Activated B cell treated with CpG ODN at 0.5 μM for 24 hours (primary cell): ENCODE measurements at regions of chr2 and their contacts with region 1.

Region 1: GRCh38 chr2:63588385-63589147 is at the starts of genes MDH1 and WDPCP:
- DNase-seq: peak; percentile 80
- ATAC-seq: peak; percentile 86
- H3K4me3 Mint-ChIP-seq: peak within 1 kb of the TSS; percentile 97
- H3K27ac Mint-ChIP-seq: peak within 1 kb of the TSS; percentile 97
- H3K4me1 Mint-ChIP-seq: peaks cover 47% of the 10 kb centered on the region
- H3K27me3 Mint-ChIP-seq: no peaks in the 10 kb centered on the region
- CTCF ChIP-seq: no peak
- total RNA-seq, gene MDH1: 117 and 120 TPM in 2 replicates
- total RNA-seq, gene WDPCP: 10.0 and 12.9 TPM in 2 replicates

Region 2: DNA sequence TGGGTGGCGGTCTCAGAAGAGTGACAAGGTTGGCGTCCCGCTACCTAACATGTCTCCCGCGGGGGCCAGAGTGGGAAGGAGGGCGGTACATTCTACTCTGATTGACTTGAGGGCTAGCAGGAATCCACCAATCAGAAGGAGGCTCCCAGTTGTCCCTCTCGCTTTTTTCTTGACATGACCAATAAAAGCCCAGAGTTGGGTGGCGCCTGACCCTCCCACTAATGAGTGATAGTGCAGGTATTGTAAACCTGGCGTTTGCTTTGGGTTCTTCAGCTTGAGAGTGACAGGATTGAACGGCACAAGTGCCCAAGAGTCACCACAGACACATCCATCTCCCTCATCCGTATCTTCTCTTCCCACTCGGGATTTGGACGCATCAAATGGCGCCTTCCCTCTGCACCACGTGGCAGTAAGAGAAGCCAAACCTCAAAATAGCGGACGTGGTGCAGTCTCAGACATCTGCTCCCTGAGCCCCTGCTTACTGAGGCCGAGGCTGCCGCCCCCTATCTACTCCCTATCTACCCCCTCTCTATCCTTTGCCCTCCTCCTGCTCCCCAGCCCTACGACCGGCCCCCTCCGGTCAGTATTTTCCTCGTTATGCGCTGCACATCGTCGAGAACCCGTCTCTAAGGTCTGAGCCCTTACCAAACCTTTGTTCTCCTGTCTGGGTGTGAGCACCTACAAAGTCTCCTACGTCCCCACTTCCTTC is 1733.9 kb before region 1 on chr2:
- CTCF ChIA-PET with region 1: no interaction called
- POLR2A ChIA-PET with region 1: no interaction called
- intact Hi-C with region 1: loop called (anchors 1 kb)
- DNase-seq: peak; percentile 69
- ATAC-seq: peak; percentile 86
- H3K4me3 Mint-ChIP-seq: peak overlapping the region; percentile 94
- H3K27ac Mint-ChIP-seq: peak overlapping the region; percentile 95
- H3K4me1 Mint-ChIP-seq: peaks cover 19% of the 10 kb centered on the region
- H3K27me3 Mint-ChIP-seq: no peaks in the 10 kb centered on the region
- CTCF ChIP-seq: no peak

Region 3: DNA sequence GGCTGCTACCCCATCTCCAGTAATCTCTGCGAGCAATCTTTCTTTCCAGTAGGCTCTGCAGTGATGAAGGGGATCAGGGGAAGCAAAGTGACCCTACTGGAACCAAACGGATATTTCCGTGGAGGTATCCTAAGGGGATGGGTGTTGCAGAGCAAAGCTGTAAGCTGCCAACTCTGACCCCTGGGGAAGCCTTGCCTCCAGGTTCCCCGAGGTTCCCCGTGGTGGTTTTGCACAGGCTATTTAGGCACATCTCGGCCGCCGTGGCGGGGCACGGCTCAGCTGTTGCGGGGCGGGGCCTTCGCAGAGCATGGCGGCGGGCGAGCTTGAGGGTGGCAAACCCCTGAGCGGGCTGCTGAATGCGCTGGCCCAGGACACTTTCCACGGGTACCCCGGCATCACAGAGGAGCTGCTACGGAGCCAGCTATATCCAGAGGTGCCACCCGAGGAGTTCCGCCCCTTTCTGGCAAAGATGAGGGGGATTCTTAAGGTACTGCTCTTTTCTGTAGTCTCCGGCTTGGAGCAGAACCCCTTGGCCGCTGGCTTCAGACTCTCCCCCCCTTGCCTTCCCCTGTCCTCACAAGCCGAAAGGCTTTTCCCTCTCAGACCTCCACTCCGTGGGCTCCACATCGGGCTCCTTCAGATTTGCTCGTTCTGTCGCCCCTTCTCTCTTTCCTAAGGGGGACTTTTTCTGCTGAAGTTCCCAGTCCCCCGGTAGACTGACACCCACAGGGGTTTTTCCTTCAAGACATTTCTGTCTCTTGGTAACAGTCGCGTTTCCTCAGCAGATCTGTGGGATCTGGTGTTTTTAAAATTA is 1683.0 kb before region 1 on chr2 and contains the start of gene COMMD1:
- CTCF ChIA-PET with region 1: no interaction called
- POLR2A ChIA-PET with region 1: no interaction called
- intact Hi-C with region 1: loop called (anchors 5 kb)
- DNase-seq: peak; percentile 78
- ATAC-seq: peak; percentile 100
- H3K4me3 Mint-ChIP-seq: peak within 1 kb of the TSS; percentile 97
- H3K27ac Mint-ChIP-seq: peak within 1 kb of the TSS; percentile 86
- H3K4me1 Mint-ChIP-seq: peaks cover 11% of the 10 kb centered on the region
- H3K27me3 Mint-ChIP-seq: no peaks in the 10 kb centered on the region
- CTCF ChIP-seq: no peak
- total RNA-seq, gene COMMD1: 36.8 and 37.1 TPM in 2 replicates

Region 4: GRCh38 chr2:63056107-63057050 is 532.2 kb before region 1 on chr2:
- CTCF ChIA-PET with region 1: no interaction called
- POLR2A ChIA-PET with region 1: no interaction called
- intact Hi-C with region 1: loop called (anchors 5 kb)
- DNase-seq: peak; percentile 22
- ATAC-seq: no peak
- H3K4me3 Mint-ChIP-seq: peak overlapping the region; percentile 48
- H3K27ac Mint-ChIP-seq: peak overlapping the region; percentile 31
- H3K4me1 Mint-ChIP-seq: peaks cover 71% of the 10 kb centered on the region
- H3K27me3 Mint-ChIP-seq: peaks cover 76% of the 10 kb centered on the region
- CTCF ChIP-seq: no peak

Region 5: GRCh38 chr2:64018923-64019718 is 430.6 kb after region 1 on chr2 and contains the start of gene VPS54:
- CTCF ChIA-PET with region 1: no interaction called
- POLR2A ChIA-PET with region 1: interaction called, 9 read pairs
- intact Hi-C with region 1: loop called (anchors 1 kb)
- DNase-seq: peak; percentile 66
- ATAC-seq: peak; percentile 80
- H3K4me3 Mint-ChIP-seq: peak within 1 kb of the TSS; percentile 97
- H3K27ac Mint-ChIP-seq: peak within 1 kb of the TSS; percentile 92
- H3K4me1 Mint-ChIP-seq: peaks cover 34% of the 10 kb centered on the region
- H3K27me3 Mint-ChIP-seq: no peaks in the 10 kb centered on the region
- CTCF ChIP-seq: no peak
- total RNA-seq, gene VPS54: 11.5 and 13.1 TPM in 2 replicates

Region 6: DNA sequence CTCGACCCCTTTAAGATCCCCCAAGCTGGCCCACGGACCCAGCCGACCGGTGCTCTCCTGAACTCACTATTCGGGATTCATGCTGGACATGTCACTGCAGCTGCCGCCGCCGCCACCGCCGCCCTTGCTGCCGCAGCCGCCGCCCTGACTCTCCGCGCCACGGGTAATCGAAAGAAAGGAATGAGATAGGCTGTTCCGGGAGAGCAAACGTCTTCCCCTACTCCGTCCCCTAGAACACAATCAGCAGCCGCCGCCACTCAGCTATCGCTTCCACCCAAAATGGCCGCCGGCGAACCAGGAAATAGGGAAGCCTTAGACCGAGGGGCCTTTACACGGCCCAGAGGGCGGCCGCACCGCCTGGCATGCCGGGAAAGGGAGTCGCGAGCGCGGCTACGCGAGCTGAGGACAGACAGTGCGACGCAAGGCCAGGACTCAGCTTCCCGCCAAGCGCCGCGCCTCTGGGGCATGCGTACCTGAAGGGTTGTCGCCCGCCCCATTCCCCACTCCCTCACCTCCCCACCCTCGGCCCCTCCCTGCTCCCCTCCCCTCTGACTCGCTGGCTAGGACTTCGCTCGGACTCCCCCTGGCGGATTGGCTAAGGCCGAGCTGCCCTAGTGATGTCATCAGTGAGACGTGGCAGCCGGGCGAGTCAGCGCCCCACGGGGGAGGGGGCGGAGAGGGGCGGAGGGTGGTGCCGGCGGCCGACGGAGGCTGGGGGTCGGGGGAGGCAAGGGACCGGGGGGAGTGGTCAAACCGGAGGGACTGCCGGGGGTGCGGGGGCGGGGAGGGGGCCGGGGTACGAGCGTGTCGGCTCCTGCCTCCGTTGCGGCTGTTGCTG is 1541.5 kb after region 1 on chr2 and contains the start of gene RAB1A:
- CTCF ChIA-PET with region 1: no interaction called
- POLR2A ChIA-PET with region 1: interaction called, 16 read pairs
- intact Hi-C with region 1: loop called (anchors 1 kb)
- DNase-seq: peak; percentile 91
- ATAC-seq: peak; percentile 93
- H3K4me3 Mint-ChIP-seq: peak within 1 kb of the TSS; percentile 100
- H3K27ac Mint-ChIP-seq: peak within 1 kb of the TSS; percentile 100
- H3K4me1 Mint-ChIP-seq: peaks cover 49% of the 10 kb centered on the region
- H3K27me3 Mint-ChIP-seq: no peaks in the 10 kb centered on the region
- CTCF ChIP-seq: no peak
- total RNA-seq, gene RAB1A: 45.0 and 46.4 TPM in 2 replicates

Region 7: GRCh38 chr2:65432227-65433190 is 1843.9 kb after region 1 on chr2 and contains the start of gene SPRED2:
- CTCF ChIA-PET with region 1: no interaction called
- POLR2A ChIA-PET with region 1: interaction called, 3 read pairs
- intact Hi-C with region 1: loop called (anchors 5 kb)
- DNase-seq: peak; percentile 62
- ATAC-seq: peak; percentile 30
- H3K4me3 Mint-ChIP-seq: peak within 1 kb of the TSS; percentile 90
- H3K27ac Mint-ChIP-seq: peak within 1 kb of the TSS; percentile 69
- H3K4me1 Mint-ChIP-seq: peaks cover 23% of the 10 kb centered on the region
- H3K27me3 Mint-ChIP-seq: peaks cover 19% of the 10 kb centered on the region
- CTCF ChIP-seq: no peak
- total RNA-seq, gene SPRED2: 2.5 and 3.1 TPM in 2 replicates